Activated naive CD4-positive, alpha-beta T cell treated with anti-CD3 and anti-CD28 coated beads, Interleukin-2, amount 10 ng/mL, durations not matched to agents 7 days and 5 days (primary cell): ENCODE measurements at regions of chr5 and their contacts with region 1.

Region 1: GRCh38 chr5:150801117-150801927 is 22.8 kb downstream of the SMIM3 start:
- DNase-seq: no peak
- H3K4me3 Mint-ChIP-seq: no peak overlapping the region
- H3K27ac Mint-ChIP-seq: no peak overlapping the region
- H3K4me1 Mint-ChIP-seq: peaks cover 12% of the 10 kb centered on the region
- H3K27me3 Mint-ChIP-seq: no peaks in the 10 kb centered on the region

Region 2: DNA sequence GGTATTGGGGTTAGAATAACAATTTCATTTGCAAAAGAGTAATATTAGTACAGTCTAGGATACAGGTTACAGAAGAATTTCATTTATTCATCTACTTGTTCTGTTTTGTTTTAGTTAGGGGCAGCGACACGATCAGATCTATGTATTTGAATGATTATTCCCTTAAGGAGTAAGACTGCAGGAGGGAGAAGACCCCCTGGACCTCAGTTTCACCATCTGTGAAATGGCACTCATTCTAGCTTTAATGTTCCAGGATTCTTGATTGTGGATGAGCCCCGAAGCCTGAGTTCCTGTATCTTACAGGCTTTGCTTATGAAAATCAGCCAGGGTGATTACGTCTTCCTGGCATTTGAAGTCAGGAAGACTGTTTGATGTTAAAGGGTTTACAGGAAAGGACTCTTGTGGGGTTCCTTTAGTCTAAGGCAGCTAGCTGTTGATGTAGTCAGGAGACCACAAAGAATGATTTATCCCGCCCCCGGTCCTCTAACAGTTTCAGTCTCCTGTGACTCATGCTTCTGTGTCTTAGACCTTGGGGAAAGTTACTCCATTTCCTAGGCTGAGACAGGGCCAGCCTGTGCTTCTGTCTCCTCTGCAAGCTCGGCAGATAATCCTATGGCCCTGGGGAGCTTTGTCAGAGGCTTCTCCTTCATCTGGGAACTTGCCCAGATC is 11.2 kb before region 1 on chr5:
- CTCF ChIA-PET with region 1: interaction called, 13 read pairs
- DNase-seq: peak; percentile 74
- H3K4me3 Mint-ChIP-seq: peak overlapping the region; percentile 31
- H3K27ac Mint-ChIP-seq: peak overlapping the region; percentile 80
- H3K4me1 Mint-ChIP-seq: peaks cover 55% of the 10 kb centered on the region
- H3K27me3 Mint-ChIP-seq: no peaks in the 10 kb centered on the region

Region 3: GRCh38 chr5:150918613-150919012 is 117.3 kb after region 1 on chr5:
- CTCF ChIA-PET with region 1: no interaction called
- DNase-seq: no peak
- H3K4me3 Mint-ChIP-seq: no peak overlapping the region
- H3K27ac Mint-ChIP-seq: no peak overlapping the region
- H3K4me1 Mint-ChIP-seq: no peaks in the 10 kb centered on the region
- H3K27me3 Mint-ChIP-seq: no peaks in the 10 kb centered on the region

Region 4: DNA sequence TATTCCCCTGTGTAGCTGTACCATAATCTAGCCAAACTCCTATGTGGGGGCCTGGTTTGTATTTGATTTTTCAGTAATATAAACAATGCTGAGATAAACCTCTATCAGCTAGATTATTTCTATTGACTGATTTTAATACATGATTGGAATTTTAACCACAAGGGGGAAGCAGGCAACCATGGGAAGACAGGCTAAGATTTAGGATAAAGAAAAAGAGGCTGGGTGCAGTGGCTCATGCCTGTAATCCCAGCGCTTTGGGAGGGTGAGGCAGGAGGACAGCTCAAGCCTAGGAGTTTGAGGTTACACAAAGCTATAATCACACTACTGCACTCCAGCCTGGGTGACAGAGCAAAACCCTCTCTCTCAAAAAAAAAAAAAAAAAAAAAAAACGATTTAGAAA is 200.9 kb after region 1 on chr5:
- CTCF ChIA-PET with region 1: no interaction called
- DNase-seq: no peak
- H3K4me3 Mint-ChIP-seq: no peak overlapping the region
- H3K27ac Mint-ChIP-seq: no peak overlapping the region
- H3K4me1 Mint-ChIP-seq: no peaks in the 10 kb centered on the region
- H3K27me3 Mint-ChIP-seq: peaks cover 14% of the 10 kb centered on the region

Region 5: GRCh38 chr5:151086905-151087360 is 285.6 kb after region 1 on chr5:
- CTCF ChIA-PET with region 1: no interaction called
- DNase-seq: peak; percentile 68
- H3K4me3 Mint-ChIP-seq: peak overlapping the region; percentile 59
- H3K27ac Mint-ChIP-seq: peak overlapping the region; percentile 50
- H3K4me1 Mint-ChIP-seq: peaks cover 58% of the 10 kb centered on the region
- H3K27me3 Mint-ChIP-seq: peaks cover 8% of the 10 kb centered on the region

Region 6: DNA sequence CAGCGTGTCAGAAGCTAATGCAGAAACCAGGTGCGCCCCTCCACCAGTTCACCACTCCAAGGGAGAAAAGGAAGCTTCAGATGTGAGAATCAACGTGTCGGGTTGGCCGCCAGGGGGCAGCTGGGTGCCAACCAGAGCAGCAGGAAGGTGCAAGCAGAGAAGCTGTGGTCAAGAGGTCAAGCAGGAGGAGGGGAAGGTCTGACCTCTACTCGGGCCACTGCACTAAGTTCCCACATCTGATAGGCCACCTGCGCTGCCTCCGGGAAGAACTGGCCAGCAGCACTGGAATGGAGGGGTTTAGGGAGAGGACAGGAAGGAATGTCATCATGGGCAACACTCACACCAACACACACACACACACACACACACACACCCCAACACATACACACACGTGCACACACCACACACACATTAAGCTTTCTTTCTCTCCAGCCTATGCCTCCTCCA is 324.9 kb after region 1 on chr5:
- CTCF ChIA-PET with region 1: no interaction called
- DNase-seq: peak; percentile 71
- H3K4me3 Mint-ChIP-seq: no peak overlapping the region
- H3K27ac Mint-ChIP-seq: peak overlapping the region; percentile 84
- H3K4me1 Mint-ChIP-seq: peaks cover 42% of the 10 kb centered on the region
- H3K27me3 Mint-ChIP-seq: no peaks in the 10 kb centered on the region